ENCODE measurements at regions of chr5 and their contacts with region 1.

Region 1: GRCh38 chr5:135116160-135116561 is 82.1 kb upstream of the PITX1 start:
- DNase-seq: peak; percentile 39
- H3K4me3 ChIP-seq: no peak overlapping the region
- H3K27ac ChIP-seq: no peak overlapping the region
- H3K4me1 ChIP-seq: peaks cover 9% of the 10 kb centered on the region
- H3K27me3 ChIP-seq: no peaks in the 10 kb centered on the region
- CTCF ChIP-seq: no peak

Region 2: GRCh38 chr5:135185481-135186065 is 69.4 kb after region 1 on chr5:
- CTCF ChIA-PET with region 1: no interaction called
- dilution Hi-C with region 1: loop called (anchors 10 kb)
- in situ Hi-C with region 1: no loop called
- intact Hi-C with region 1: no loop called
- DNase-seq: peak; percentile 39
- H3K4me3 ChIP-seq: no peak overlapping the region
- H3K27ac ChIP-seq: no peak overlapping the region
- H3K4me1 ChIP-seq: peaks cover 9% of the 10 kb centered on the region
- H3K27me3 ChIP-seq: no peaks in the 10 kb centered on the region
- CTCF ChIP-seq: no peak

Measured in mammary epithelial cell (primary cell).